ENCODE measurements at regions of chr2 and their contacts with region 1.

Region 1: GRCh38 chr2:222655787-222656525 is at the start of gene FARSB:
- DNase-seq: peak; percentile 97 to 98
- H3K4me3 ChIP-seq: peak within 1 kb of the TSS; percentile 96
- H3K4me3 Mint-ChIP-seq: peak within 1 kb of the TSS; percentile 92
- H3K27ac Mint-ChIP-seq: peak within 1 kb of the TSS; percentile 95
- H3K4me1 ChIP-seq: peaks cover 5% of the 10 kb centered on the region; the same call in 1 of the 2 replicates
- H3K4me1 Mint-ChIP-seq: peaks cover 13% of the 10 kb centered on the region
- H3K27me3 ChIP-seq: no peaks in the 10 kb centered on the region
- H3K27me3 Mint-ChIP-seq: no peaks in the 10 kb centered on the region
- CTCF ChIP-seq: no peak
- total RNA-seq, gene FARSB: 48.9 and 50.9 TPM in 2 replicates

Region 2: DNA sequence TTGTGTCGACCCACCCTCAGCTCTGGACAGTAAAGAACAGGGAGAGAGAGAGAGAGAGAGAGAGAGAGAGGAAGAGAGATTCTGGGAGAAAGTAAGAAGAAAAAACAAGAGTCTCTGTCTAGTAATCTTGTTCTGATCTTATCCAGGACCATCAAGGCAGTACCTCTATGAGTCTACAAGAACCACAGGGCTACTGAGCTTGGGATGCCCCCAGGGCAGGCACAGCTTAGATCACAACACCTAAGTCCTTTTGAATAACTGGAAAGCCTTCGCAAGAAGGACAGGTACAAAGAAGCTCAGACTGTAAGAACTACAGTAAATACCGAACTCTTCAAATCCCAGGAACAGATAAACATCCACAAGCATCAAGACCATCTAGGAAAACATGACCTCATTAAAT is 283.0 kb before region 1 on chr2:
- CTCF ChIA-PET with region 1: no interaction called
- POLR2A ChIA-PET with region 1: no interaction called
- intact Hi-C with region 1: no loop called
- DNase-seq: no peak
- H3K4me3 ChIP-seq: no peak overlapping the region
- H3K4me3 Mint-ChIP-seq: no peak overlapping the region
- H3K27ac Mint-ChIP-seq: no peak overlapping the region
- H3K4me1 ChIP-seq: no peaks in the 10 kb centered on the region
- H3K4me1 Mint-ChIP-seq: no peaks in the 10 kb centered on the region
- H3K27me3 ChIP-seq: no peaks in the 10 kb centered on the region
- H3K27me3 Mint-ChIP-seq: peaks cover 13% of the 10 kb centered on the region
- CTCF ChIP-seq: no peak

Region 3: DNA sequence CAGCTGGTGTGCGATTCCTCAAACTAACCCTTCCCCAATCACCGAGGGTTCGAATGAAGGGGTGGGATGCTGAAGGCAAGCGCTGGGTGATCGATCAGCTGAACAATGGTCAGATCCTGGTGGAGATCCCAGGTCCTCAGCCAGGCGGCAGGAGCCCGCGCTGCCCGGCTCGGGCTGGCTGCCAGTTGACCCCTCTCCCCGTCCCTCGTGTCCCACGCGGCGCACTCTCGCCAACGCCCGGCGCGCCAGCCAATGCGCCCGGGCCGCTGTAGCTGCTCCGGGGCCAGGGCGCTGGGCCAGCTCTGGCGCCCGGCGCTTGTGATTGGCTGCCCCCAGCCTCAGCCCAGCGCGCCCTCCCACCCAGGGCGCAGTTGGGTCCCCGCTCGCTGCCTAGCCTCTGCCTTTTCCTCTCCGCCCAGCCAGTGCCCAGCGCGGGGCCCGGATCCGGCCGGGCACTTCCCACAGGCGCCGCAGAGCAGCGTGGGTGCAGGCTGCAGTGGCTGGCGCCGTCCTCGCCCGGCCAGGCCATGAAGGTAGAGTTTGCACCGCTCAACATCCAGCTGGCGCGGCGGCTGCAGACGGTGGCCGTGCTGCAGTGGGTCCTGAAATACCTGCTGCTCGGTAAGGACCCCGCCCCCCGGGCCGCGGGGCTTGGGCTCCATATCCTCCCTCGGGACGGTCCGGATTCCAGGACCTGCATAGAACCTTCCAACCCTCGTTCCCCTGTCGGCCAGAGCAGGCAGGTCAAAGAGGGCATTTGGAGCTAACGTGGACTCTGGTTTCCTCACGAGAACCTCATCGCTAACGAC is 15.5 kb after region 1 on chr2 and contains the start of gene MOGAT1:
- CTCF ChIA-PET with region 1: no interaction called
- POLR2A ChIA-PET with region 1: interaction called, 3 read pairs
- intact Hi-C with region 1: loop called (anchors 1 kb)
- DNase-seq: peak; percentile 74 to 75
- H3K4me3 ChIP-seq: peak within 1 kb of the TSS; percentile 41
- H3K4me3 Mint-ChIP-seq: peak within 1 kb of the TSS; percentile 79
- H3K27ac Mint-ChIP-seq: no peak within 1 kb of the TSS
- H3K4me1 ChIP-seq: peaks cover 10% of the 10 kb centered on the region
- H3K4me1 Mint-ChIP-seq: peaks cover 12% of the 10 kb centered on the region
- H3K27me3 ChIP-seq: no peaks in the 10 kb centered on the region
- H3K27me3 Mint-ChIP-seq: no peaks in the 10 kb centered on the region
- CTCF ChIP-seq: peak; percentile 22
- total RNA-seq, gene MOGAT1: not detected in 2 replicates

Measured in Caco-2 (cell line).